ENCODE measurements at regions of chr18 and their contacts with region 1.

Region 1: GRCh38 chr18:8443505-8443904 is 165.7 kb upstream of the RAB12 start:
- DNase-seq: no peak
- ATAC-seq: no peak
- H3K4me3 ChIP-seq: no peak overlapping the region
- H3K27ac ChIP-seq: no peak overlapping the region
- H3K4me1 ChIP-seq: peaks cover 0 to 6% (median 0%) of the 10 kb centered on the region in 9 donors
- H3K27me3 ChIP-seq: no peaks in the 10 kb centered on the region
- CTCF ChIP-seq: no peak

Region 2: DNA sequence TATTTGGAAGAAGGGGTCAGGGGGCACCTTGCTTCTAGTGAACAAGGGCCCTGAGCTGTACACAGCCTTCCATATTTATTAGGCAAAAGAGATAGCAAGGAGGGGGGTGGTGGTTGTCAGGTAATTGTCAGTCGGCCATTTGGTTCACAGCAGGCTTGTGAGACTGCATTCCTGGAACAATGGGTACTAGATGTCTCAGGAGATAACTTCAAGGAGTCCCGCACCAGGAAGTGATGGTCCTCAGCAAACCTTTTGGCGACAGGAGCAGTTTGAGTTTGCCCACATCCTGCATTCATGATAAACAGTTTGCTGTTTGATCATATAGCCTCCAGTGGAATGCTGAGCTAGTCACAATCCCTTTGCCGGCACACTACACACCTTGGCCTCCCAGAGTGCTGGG is 210.7 kb before region 1 on chr18:
- intact Hi-C with region 1: no loop called
- DNase-seq: no peak
- ATAC-seq: no peak
- H3K4me3 ChIP-seq: no peak overlapping the region
- H3K27ac ChIP-seq: no peak overlapping the region
- H3K4me1 ChIP-seq: peaks cover 0 to 10% (median 0%) of the 10 kb centered on the region in 9 donors
- H3K27me3 ChIP-seq: no peaks in the 10 kb centered on the region
- CTCF ChIP-seq: no peak

Region 3: DNA sequence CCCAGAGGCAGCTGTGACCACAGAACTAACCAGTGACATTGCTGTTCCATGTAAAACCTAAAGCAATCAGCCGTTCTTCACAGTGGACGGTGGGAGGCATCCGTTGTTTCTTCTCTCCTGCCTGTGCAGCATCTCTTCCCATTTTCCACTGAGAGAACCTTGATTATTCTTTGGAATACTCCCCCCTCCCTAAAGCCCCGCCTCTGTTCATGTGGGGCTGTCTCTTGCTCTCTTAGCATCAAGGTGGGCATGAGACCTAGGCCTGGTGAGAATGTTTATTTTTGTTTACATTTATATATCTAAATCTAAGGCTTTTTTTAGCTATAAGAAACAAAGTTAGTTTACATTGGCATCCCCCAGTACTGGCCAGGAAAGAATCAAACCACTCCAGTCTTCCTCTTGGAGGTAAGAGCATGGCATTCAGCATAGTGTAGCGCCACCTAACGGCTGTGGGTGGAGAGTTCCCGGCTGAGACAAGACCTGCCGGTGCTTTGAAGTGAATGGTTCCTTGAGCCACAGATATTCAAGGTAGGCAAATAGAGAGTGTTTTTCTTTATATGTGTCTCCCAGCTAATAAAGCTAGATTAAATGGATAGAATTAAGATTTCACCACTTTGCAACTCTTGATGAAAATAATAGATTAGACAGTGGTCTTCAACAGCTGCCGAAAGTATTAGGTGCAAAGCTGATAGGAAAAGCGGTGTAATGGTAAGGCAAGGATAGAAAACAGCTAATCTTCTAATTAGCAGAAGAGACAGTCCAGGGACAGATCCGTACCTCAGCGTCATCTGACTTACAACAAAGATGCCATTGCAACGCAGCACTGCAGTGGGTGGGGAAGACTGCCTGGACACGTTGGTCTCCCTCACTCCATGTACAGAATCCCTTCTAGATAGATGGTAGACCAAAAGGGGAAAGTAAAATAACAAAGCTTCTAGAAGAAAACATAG is 53.8 kb before region 1 on chr18:
- intact Hi-C with region 1: loop called in 1 of 10 experiments (anchors 10 kb)
- DNase-seq: peak; percentile 59
- ATAC-seq: peak; percentile 81 to 90 (median 84)
- H3K4me3 ChIP-seq: no peak overlapping the region
- H3K27ac ChIP-seq: no peak overlapping the region
- H3K4me1 ChIP-seq: peaks cover 0 to 7% (median 0%) of the 10 kb centered on the region in 9 donors
- H3K27me3 ChIP-seq: no peaks in the 10 kb centered on the region
- CTCF ChIP-seq: peak; percentile 48 to 86 (median 79)

Measured in heart right ventricle (tissue), 16 donors.